Cardiac septum (tissue), 1 donor: ENCODE measurements at regions of chr2 and their contacts with region 1.

Region 1: DNA sequence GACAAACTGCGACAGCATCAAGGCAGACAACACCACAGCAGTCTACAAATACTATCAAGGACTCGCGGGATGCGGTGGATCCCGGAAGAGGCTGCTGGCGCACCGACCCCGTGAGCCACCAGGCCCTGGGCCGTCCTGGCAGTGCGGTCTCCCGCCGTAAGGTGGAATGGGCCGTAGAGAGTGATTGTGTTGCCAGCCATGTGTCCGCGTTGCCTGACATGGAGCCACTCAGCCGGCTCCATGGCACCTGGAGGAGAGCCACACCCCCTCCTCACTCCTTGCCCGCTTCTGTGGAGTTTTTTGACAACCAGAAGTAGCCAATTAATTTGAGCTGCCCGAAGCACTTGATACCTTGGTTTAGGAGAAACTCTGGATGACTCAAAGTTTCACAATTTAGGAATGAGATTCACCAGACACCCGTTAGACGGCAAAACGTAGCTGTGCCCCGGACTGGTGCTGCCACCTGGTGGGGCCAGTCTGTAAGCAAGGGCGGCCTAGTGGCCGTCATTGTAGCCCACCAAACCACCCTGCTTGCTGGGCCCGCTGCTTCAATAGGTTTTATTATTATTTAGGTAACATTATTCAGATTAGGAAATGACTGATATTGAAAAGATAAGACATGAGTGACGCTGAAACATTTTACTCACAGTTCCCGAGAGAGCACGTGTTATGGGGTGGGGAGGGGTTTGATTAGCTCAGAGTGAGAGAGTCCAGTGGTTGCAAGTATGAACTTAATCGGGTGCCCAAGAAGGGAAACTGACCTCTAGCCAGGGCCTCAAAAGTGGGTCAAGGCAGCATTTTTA is 10.2 kb upstream of the IMP4 start:
- DNase-seq: no peak

Region 2: DNA sequence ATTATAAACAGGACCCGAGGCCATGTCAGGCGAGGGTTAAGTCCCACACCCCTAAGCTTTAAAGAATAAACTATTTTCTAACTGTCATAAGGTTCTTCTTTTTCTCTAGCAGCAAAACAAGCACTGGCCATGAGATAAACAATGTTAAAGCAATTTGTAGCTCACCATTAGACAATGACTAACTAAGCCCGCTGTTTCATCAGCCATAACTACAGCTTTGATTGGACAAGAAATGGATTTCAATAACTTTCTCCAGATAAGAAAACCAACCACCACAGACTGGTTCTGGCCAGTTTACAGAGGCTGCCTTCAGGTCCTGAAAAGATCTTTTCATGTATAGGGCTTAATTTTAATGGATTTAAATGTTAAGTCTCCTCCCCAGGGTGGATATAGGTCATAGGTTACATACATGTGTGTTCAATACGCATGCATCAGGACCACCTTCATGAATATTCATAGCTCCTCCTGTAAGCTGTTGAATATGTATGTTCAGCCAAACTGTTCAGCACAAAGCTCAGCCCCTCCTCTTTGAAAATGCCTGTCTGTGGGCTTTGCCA is 461.7 kb before region 1 on chr2:
- intact Hi-C with region 1: no loop called
- DNase-seq: no peak

Region 3: DNA sequence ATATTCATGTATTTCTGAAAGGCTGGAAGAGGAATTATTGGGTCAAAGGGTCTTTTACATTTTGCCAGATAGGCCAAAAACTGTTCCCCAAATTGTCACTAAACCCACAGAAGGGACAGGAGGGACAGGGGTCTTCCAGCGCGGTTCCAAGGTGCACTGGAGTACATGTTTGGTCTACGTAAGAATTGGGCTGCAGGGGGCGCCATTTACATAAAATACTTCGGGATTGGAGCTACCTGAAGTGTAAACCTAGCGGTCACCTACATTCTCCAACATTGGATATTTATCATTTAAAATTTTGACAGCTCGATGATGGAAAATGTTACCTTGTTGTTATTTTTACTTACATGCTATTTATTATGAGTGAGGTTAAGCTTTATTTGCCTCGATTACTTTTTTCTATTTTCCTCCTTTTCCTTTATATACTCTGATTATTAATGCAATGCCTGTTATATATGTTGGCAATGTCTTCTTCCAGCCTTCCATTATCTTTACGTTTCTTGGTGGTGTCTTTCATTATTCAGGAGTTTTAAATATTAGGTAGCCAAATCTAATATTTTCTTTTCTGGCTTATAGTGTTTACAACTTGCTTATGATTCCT is 396.0 kb before region 1 on chr2:
- intact Hi-C with region 1: loop called (anchors 1 kb)
- DNase-seq: no peak

Region 4: DNA sequence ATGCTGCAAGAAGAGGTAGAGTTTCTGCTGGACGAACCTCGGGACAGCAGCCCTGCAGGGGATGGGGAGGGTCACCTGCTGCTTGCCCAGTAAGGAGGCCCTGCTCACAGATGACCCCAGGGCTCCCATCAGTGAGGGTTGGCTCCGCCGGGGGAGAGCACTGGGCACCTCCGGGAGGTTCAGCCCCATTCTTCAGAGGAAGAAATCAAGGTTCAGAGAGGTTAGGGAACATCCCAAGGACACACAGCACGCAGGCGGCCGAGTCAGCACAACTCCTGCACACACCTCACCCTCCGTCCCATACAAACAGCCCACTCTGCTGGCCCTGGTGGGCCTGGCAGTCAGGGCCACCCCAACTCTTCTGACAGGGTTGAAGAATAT is 175.9 kb before region 1 on chr2:
- intact Hi-C with region 1: loop called (anchors 1 kb)
- DNase-seq: no peak

Region 5: GRCh38 chr2:130181325-130181879 is 151.1 kb before region 1 on chr2 and contains the start of gene SMPD4:
- intact Hi-C with region 1: loop called (anchors 2 kb)
- DNase-seq: peak; percentile 99
- total RNA-seq, gene SMPD4: 22.5 TPM

Region 6: GRCh38 chr2:130252880-130253645 is 79.4 kb before region 1 on chr2:
- intact Hi-C with region 1: no loop called
- DNase-seq: peak; percentile 57